Calu3 (cell line): ENCODE measurements at regions of chr7 and their contacts with region 1.

Region 1: GRCh38 chr7:20560325-20561180 is 54.9 kb upstream of the ABCB5 start:
- DNase-seq: no peak
- H3K4me3 Mint-ChIP-seq: no peak overlapping the region
- H3K27ac Mint-ChIP-seq: peak overlapping the region; percentile 97
- H3K4me1 Mint-ChIP-seq: peaks cover 42% of the 10 kb centered on the region
- H3K27me3 Mint-ChIP-seq: no peaks in the 10 kb centered on the region
- CTCF ChIP-seq: no peak

Region 2: GRCh38 chr7:20343205-20343604 is 217.3 kb before region 1 on chr7:
- CTCF ChIA-PET with region 1: no interaction called
- intact Hi-C with region 1: loop called (anchors 5 kb)
- DNase-seq: no peak
- H3K4me3 Mint-ChIP-seq: peak overlapping the region; percentile 38
- H3K27ac Mint-ChIP-seq: no peak overlapping the region
- H3K4me1 Mint-ChIP-seq: peaks cover 23% of the 10 kb centered on the region
- H3K27me3 Mint-ChIP-seq: no peaks in the 10 kb centered on the region
- CTCF ChIP-seq: no peak

Region 3: GRCh38 chr7:20407585-20408461 is 152.7 kb before region 1 on chr7:
- CTCF ChIA-PET with region 1: no interaction called
- intact Hi-C with region 1: loop called (anchors 2 kb)
- DNase-seq: peak; percentile 77
- H3K4me3 Mint-ChIP-seq: peak overlapping the region; percentile 22
- H3K27ac Mint-ChIP-seq: peak overlapping the region; percentile 83
- H3K4me1 Mint-ChIP-seq: peaks cover 52% of the 10 kb centered on the region
- H3K27me3 Mint-ChIP-seq: no peaks in the 10 kb centered on the region
- CTCF ChIP-seq: no peak

Region 4: GRCh38 chr7:20438694-20439376 is 121.7 kb before region 1 on chr7:
- CTCF ChIA-PET with region 1: no interaction called
- intact Hi-C with region 1: loop called (anchors 10 kb)
- DNase-seq: no peak
- H3K4me3 Mint-ChIP-seq: no peak overlapping the region
- H3K27ac Mint-ChIP-seq: peak overlapping the region; percentile 65
- H3K4me1 Mint-ChIP-seq: peaks cover 54% of the 10 kb centered on the region
- H3K27me3 Mint-ChIP-seq: no peaks in the 10 kb centered on the region
- CTCF ChIP-seq: no peak

Region 5: DNA sequence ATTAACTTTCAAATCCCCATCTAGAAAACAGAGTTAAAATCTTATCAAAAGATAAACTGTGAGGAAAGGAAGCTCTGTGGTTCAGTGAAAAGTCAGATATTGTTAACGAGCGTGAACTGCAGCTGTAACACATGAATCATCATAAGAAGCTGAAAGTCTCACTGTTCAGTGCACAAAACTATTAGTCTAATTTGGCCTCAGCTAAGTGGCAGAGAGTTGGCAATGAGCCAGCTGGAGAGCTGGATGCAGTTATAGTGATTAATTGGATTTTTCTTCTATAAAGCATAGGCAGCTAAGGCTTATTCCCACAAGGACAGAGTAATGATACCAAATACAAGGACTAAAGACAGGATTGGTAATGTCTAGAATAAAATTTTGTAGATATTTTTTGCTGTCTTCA is 46.2 kb before region 1 on chr7:
- CTCF ChIA-PET with region 1: no interaction called
- intact Hi-C with region 1: loop called (anchors 2 kb)
- DNase-seq: peak; percentile 77
- H3K4me3 Mint-ChIP-seq: no peak overlapping the region
- H3K27ac Mint-ChIP-seq: peak overlapping the region; percentile 70
- H3K4me1 Mint-ChIP-seq: peaks cover 17% of the 10 kb centered on the region
- H3K27me3 Mint-ChIP-seq: no peaks in the 10 kb centered on the region
- CTCF ChIP-seq: no peak